Activated B cell treated with CpG ODN at 0.5 μM for 24 hours (primary cell): ENCODE measurements at regions of chr1 and their contacts with region 1.

Region 1: DNA sequence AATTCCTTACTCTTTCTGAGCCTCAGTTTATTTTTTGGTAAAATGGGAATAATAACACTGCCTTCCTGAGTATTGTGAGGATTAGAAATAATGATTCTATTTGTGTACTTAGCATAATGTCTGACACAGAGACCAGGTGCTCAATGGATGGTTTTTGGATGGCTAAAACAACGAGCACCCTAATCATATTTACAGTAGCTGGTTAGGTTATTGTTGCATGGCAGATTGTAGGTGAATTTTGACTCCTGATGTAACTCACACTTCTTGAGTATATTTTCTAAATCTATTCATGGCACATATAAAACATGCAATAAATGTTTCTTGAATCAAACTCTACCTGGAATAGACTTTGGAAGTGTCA is 11.9 kb upstream of the DUSP10 start:
- DNase-seq: no peak
- ATAC-seq: peak; percentile 4
- H3K4me3 Mint-ChIP-seq: peak overlapping the region; percentile 71
- H3K27ac Mint-ChIP-seq: peak overlapping the region; percentile 89
- H3K4me1 Mint-ChIP-seq: peaks cover 50% of the 10 kb centered on the region
- H3K27me3 Mint-ChIP-seq: no peaks in the 10 kb centered on the region
- CTCF ChIP-seq: no peak

Region 2: DNA sequence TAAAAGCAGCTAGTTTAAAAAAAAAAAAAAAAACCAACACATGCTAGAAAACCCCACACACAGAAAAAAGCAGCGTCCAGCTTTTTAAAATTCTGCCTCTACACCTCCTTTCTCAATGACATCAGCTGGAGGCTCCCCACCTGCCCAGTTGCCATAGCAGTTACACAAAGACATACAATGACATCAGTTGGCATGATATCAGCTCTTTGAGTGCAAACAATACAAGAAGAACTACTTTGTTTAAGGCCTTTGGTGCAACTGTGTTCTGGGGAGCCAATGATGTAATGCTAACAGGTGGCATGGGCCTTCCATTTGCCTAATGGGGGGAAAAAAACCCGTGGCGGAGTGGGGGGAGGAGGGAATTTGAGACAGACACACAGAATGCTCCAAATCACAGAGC is 44.8 kb before region 1 on chr1:
- CTCF ChIA-PET with region 1: no interaction called
- POLR2A ChIA-PET with region 1: interaction called, 14 read pairs
- intact Hi-C with region 1: no loop called
- DNase-seq: peak; percentile 20
- ATAC-seq: peak; percentile 32
- H3K4me3 Mint-ChIP-seq: peak overlapping the region; percentile 37
- H3K27ac Mint-ChIP-seq: peak overlapping the region; percentile 82
- H3K4me1 Mint-ChIP-seq: peaks cover 60% of the 10 kb centered on the region
- H3K27me3 Mint-ChIP-seq: no peaks in the 10 kb centered on the region
- CTCF ChIP-seq: no peak

Region 3: GRCh38 chr1:221729771-221730330 is 24.0 kb before region 1 on chr1:
- CTCF ChIA-PET with region 1: no interaction called
- POLR2A ChIA-PET with region 1: no interaction called
- intact Hi-C with region 1: no loop called
- DNase-seq: no peak
- ATAC-seq: no peak
- H3K4me3 Mint-ChIP-seq: no peak overlapping the region
- H3K27ac Mint-ChIP-seq: no peak overlapping the region
- H3K4me1 Mint-ChIP-seq: peaks cover 67% of the 10 kb centered on the region
- H3K27me3 Mint-ChIP-seq: no peaks in the 10 kb centered on the region
- CTCF ChIP-seq: no peak

Region 4: DNA sequence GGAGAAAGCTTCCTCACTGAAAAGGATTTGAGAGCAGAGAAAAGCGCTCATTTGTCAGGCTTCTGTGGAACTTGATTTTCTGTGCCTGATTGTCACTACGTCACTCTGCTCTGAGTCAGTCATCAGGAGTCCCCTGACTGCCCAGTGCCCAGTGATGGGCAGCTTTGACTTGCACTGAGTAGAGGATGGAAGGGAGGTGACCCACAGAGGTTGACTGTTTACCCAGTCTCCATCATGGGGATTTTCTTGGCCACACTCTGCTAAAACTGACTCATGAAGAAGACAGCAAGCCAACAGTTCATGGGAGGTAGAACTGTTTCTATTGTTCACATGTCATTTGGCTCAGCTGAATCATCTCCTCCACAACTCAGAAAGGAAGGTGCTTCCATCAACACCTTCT is 70.2 kb after region 1 on chr1:
- CTCF ChIA-PET with region 1: no interaction called
- POLR2A ChIA-PET with region 1: no interaction called
- intact Hi-C with region 1: loop called (anchors 1 kb)
- DNase-seq: no peak
- ATAC-seq: peak; percentile 40
- H3K4me3 Mint-ChIP-seq: peak overlapping the region; percentile 58
- H3K27ac Mint-ChIP-seq: peak overlapping the region; percentile 85
- H3K4me1 Mint-ChIP-seq: peaks cover 67% of the 10 kb centered on the region
- H3K27me3 Mint-ChIP-seq: no peaks in the 10 kb centered on the region
- CTCF ChIP-seq: no peak

Region 5: GRCh38 chr1:221939607-221940006 is 185.8 kb after region 1 on chr1:
- CTCF ChIA-PET with region 1: no interaction called
- POLR2A ChIA-PET with region 1: no interaction called
- intact Hi-C with region 1: loop called (anchors 1 kb)
- DNase-seq: peak; percentile 49
- ATAC-seq: peak; percentile 95
- H3K4me3 Mint-ChIP-seq: peak overlapping the region; percentile 66
- H3K27ac Mint-ChIP-seq: peak overlapping the region; percentile 79
- H3K4me1 Mint-ChIP-seq: peaks cover 41% of the 10 kb centered on the region
- H3K27me3 Mint-ChIP-seq: no peaks in the 10 kb centered on the region
- CTCF ChIP-seq: no peak